WTC11 (cell line): ENCODE measurements at regions of chr21 and their contacts with region 1.

Region 1: DNA sequence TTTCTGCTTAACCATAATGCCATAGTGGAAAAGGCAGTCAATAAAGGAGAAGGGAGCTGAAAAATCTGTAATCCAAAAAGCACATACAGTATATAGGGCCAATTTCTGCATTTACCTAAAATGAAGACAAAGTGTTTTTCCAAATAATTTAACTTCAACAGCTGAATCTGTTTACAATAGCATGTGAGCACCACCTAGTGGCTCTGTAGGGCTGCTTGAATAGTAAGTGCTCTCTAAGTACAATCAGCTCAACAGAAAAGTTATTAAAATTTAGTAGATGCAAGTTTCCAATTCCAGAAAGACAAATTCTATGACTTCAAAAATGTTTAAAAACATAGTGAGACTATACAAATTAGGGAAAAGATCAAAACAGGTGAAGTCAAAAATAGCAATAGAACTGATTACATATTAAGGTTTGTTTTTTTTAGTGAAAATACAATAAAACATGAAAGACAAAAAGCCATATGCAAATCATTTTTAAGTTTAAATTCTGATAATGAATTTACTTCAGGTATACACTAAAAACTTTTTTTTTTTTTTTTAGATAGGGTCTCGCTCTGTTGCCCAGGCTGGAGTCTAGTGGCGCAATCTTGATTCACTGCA is 220.0 kb downstream of the SETD4 start:
- DNase-seq: peak; percentile 45
- ATAC-seq: no peak
- H3K4me3 Mint-ChIP-seq: no peak overlapping the region
- H3K27ac Mint-ChIP-seq: no peak overlapping the region
- H3K4me1 Mint-ChIP-seq: no peaks in the 10 kb centered on the region
- H3K27me3 Mint-ChIP-seq: no peaks in the 10 kb centered on the region
- CTCF ChIP-seq: peak; percentile 69

Region 2: DNA sequence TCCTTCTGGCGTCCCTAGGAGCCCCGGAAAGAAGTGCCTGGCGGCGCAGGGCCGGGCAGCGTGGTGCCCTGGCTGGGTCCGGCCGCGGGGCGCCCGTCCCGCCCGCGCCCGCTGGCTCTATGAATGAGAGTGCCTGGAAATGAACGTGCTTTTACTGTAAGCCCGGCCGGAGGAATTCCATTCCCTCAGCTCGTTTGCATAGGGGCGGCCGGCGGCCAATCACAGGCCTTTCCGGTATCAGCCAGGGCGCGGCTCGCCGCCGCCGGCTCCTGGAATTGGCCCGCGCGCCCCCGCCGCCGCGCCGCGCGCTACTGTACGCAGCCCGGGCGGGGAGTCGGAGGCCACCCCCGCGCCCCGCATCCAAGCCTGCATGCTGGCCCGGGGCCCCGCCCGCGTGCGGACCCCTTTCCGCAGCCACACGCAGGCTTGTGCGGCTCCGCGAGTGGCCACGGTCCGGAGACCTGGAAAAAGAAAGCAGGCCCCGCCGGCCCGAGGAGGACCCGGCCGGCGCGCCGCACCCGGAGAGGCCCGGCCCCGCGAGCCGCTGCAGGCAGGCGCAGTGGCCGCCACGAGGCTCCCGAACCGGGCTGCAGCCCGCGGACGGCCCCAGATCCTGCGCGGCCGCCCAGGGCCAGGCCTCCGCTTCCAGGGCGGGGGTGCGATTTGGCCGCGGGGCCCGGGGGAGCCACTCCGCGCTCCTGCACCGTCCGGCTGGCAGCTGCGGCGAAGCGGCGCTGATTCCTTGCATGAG is 951.6 kb before region 1 on chr21:
- CTCF ChIA-PET with region 1: interaction called, 10 read pairs
- POLR2A ChIA-PET with region 1: no interaction called
- DNase-seq: peak; percentile 92
- ATAC-seq: peak; percentile 80
- H3K4me3 Mint-ChIP-seq: peak overlapping the region; percentile 87
- H3K27ac Mint-ChIP-seq: no peak overlapping the region
- H3K4me1 Mint-ChIP-seq: peaks cover 32% of the 10 kb centered on the region
- H3K27me3 Mint-ChIP-seq: peaks cover 83% of the 10 kb centered on the region
- CTCF ChIP-seq: no peak

Region 3: DNA sequence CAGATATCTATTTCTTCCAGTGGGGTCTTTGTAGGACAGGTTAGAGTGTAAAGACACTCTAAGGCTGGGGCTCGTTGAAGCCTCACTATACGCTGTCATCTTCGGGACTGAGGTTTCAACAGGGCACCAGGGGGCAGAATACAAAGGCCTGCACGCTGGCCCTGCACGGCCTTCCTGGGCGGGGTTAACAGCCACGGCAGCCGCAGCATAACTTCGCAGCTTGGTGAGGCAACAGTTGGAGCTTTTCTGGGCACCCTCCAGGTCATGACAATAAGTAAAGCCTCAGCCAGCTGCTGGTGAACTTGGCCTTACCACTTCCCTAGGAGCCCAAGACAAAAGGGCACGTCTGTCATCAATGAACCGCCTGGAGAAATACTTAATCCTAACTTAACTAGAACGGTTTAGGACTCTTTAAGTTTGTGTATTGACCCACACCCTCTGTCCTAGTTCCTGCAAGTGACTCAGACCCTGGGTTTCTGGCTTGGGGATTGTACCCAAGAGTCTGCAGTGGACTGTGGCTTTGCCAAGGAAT is 788.9 kb before region 1 on chr21:
- CTCF ChIA-PET with region 1: interaction called, 16 read pairs
- POLR2A ChIA-PET with region 1: no interaction called
- DNase-seq: peak; percentile 79
- ATAC-seq: peak; percentile 96
- H3K4me3 Mint-ChIP-seq: no peak overlapping the region
- H3K27ac Mint-ChIP-seq: no peak overlapping the region
- H3K4me1 Mint-ChIP-seq: peaks cover 33% of the 10 kb centered on the region
- H3K27me3 Mint-ChIP-seq: no peaks in the 10 kb centered on the region; the same call in 1 of the 2 replicates
- CTCF ChIP-seq: no peak

Region 4: GRCh38 chr21:35649186-35649585 is 191.1 kb before region 1 on chr21:
- CTCF ChIA-PET with region 1: no interaction called
- POLR2A ChIA-PET with region 1: no interaction called
- DNase-seq: no peak
- ATAC-seq: no peak
- H3K4me3 Mint-ChIP-seq: no peak overlapping the region
- H3K27ac Mint-ChIP-seq: no peak overlapping the region
- H3K4me1 Mint-ChIP-seq: peaks cover 18% of the 10 kb centered on the region
- H3K27me3 Mint-ChIP-seq: 0 out of 2 replicates have a peak, but pooled peaks cover 3% of the 10 kb centered on the region
- CTCF ChIP-seq: no peak